ENCODE measurements at regions of chr10 and their contacts with region 1.

Region 1: DNA sequence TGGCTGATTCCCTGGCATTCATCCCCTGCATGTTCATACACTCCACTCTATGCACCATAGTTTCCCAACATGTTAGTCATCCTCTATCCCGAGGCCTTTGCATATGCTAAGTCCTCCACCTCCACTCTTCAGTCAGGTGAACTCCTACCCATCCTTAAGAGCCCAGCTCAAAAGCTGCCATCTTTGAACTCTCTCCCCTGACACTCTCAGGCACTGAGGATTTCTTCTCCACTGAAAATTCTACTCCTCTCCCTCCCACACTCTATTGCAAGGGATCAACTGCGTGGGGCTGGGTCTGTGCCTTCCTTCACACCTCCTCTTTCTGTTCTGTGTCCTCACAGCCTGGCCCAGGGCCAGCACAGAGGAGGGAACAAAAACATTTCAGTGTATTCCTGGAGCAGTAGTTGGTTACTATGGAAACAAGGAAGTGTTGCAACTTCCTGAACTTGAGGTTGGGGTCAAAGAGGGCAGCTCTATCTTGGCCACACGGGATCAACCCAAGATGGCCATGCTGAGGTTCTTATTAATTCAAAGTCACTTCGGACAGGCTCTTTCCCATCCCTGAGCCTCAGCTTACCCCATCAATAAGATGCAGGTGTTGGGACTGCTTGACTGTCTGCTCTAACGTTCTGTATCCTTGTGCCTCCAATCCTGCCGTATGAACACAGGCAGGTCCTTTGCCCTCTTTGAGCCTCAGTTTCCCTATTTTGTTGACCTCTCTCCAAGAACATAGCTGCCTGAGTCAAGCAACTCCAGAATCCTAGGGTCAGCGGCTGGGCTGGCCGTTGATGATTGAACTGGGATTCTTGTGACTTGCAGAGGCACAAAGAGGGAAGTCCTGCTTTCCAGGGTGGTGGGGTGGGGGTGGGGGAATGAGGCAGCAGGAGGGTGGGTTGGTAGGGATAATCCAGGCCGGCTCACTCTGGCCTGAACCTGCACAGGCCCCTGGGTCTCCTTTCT is 15.5 kb downstream of the ZMIZ1 start:
- DNase-seq: peak; percentile 77
- ATAC-seq: peak; percentile 1; the same call in 1 of the 2 replicates
- H3K4me3 ChIP-seq: no peak overlapping the region
- H3K27ac ChIP-seq: no peak overlapping the region
- H3K4me1 ChIP-seq: peaks cover 43% of the 10 kb centered on the region
- H3K27me3 ChIP-seq: no peaks in the 10 kb centered on the region
- CTCF ChIP-seq: no peak

Region 2: DNA sequence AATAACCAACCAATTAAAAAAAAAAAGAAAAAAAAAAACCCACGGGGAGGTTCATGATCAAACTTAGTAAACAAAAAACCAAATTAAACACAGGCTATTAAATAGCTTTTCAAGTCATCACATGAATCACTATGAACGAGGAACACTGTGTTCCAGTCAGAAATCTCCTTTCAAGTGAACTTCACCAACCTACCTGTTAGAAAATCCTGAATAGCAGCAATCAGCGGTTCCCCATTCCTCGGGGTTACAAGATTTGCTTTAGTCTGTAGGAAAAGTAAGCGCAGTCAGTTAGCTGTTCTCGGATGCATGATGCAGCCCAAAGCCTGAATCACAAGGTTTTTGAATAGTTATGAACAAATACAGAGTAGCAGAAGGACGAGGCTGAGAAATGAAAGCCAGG is 1074.0 kb before region 1 on chr10:
- CTCF ChIA-PET with region 1: interaction called, 14 read pairs
- POLR2A ChIA-PET with region 1: no interaction called
- intact Hi-C with region 1: no loop called
- DNase-seq: no peak
- ATAC-seq: no peak
- H3K4me3 ChIP-seq: no peak overlapping the region
- H3K27ac ChIP-seq: no peak overlapping the region
- H3K4me1 ChIP-seq: peaks cover 10% of the 10 kb centered on the region
- H3K27me3 ChIP-seq: no peaks in the 10 kb centered on the region
- CTCF ChIP-seq: no peak

Region 3: GRCh38 chr10:78981257-78981969 is 102.9 kb before region 1 on chr10:
- CTCF ChIA-PET with region 1: no interaction called
- POLR2A ChIA-PET with region 1: interaction called, 12 read pairs
- intact Hi-C with region 1: no loop called
- DNase-seq: no peak
- ATAC-seq: peak; percentile 7
- H3K4me3 ChIP-seq: no peak overlapping the region
- H3K27ac ChIP-seq: no peak overlapping the region
- H3K4me1 ChIP-seq: peaks cover 6% of the 10 kb centered on the region; the same call in 1 of the 2 replicates
- H3K27me3 ChIP-seq: no peaks in the 10 kb centered on the region
- CTCF ChIP-seq: no peak

Measured in PC-3 (cell line).